Calu3 (cell line): ENCODE measurements at regions of chr2 and their contacts with region 1.

Region 1: DNA sequence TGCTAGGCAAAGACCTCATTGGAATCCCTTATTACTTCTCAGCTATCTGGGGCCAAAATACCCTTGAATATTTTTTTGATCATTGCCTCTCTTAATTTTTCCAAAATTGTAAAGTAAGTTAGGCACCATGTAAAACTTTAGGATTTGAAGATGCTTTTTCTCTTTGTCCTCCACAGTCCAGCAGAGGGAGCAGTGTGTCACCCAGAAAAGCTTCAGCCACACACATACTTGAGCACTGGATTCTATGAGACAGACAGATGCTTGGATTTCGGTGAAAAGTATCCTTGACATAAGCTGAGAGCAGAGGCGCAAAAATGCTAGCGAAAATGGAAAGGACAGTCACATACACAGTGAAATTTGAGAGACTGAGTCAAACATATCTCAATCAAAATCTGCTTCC is 74.7 kb upstream of the KCNJ3 start:
- DNase-seq: peak; percentile 53
- H3K4me3 Mint-ChIP-seq: no peak overlapping the region
- H3K27ac Mint-ChIP-seq: no peak overlapping the region
- H3K4me1 Mint-ChIP-seq: no peaks in the 10 kb centered on the region
- H3K27me3 Mint-ChIP-seq: no peaks in the 10 kb centered on the region
- CTCF ChIP-seq: peak; percentile 55

Region 2: DNA sequence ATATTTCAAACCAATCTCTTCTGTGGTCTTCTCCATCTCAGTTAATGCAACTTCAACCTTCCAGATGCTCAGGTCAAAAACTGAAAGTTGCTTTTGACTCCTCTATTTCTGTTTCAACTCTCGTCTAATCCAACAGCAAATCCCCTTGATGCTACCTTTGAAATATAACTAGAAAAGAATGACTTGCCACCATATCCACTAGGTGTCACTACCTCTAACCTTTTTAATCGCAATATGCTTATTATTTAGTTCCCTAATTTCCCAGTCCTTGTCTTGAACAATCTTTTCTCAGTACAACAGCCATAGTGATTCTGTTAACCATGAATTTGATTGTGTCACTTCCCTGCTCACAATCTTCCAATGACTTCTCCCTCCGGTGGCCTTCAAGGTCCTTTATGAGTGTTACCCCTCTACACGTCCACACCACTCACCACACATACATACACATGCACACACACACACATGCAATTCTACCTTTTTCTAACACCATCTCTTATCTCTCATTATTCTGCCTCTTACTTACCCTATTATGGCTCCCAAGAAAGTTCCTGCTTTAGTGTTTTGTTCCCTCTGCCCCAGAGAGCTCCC is 170.8 kb before region 1 on chr2:
- CTCF ChIA-PET with region 1: interaction called, 4 read pairs
- intact Hi-C with region 1: loop called (anchors 2 kb)
- DNase-seq: no peak
- H3K4me3 Mint-ChIP-seq: no peak overlapping the region
- H3K27ac Mint-ChIP-seq: no peak overlapping the region
- H3K4me1 Mint-ChIP-seq: no peaks in the 10 kb centered on the region
- H3K27me3 Mint-ChIP-seq: no peaks in the 10 kb centered on the region
- CTCF ChIP-seq: peak; percentile 32

Region 3: GRCh38 chr2:154638783-154639182 is 15.0 kb after region 1 on chr2:
- CTCF ChIA-PET with region 1: no interaction called
- intact Hi-C with region 1: no loop called
- DNase-seq: no peak
- H3K4me3 Mint-ChIP-seq: no peak overlapping the region
- H3K27ac Mint-ChIP-seq: no peak overlapping the region
- H3K4me1 Mint-ChIP-seq: peaks cover 9% of the 10 kb centered on the region
- H3K27me3 Mint-ChIP-seq: no peaks in the 10 kb centered on the region
- CTCF ChIP-seq: no peak

Region 4: DNA sequence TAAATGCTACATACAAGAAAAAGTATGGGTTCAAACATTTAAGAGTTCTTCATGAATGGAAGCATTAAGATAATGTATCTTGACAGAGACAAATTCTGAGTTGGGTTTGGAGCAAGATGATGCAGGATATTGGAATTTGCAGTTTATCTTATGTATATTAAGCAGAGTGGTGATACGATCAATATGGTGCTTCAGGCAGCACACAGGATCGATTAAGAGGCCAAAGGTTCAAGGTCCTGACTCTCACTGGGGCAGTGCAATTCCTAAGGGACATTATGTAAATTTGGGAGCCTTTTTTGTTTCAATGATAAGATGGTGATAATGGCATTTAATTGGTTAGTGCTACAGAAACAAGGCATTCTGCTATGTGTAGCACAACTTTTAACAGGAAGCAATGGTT is 456.6 kb after region 1 on chr2:
- CTCF ChIA-PET with region 1: no interaction called
- intact Hi-C with region 1: loop called (anchors 1 kb)
- DNase-seq: no peak
- H3K4me3 Mint-ChIP-seq: no peak overlapping the region
- H3K27ac Mint-ChIP-seq: peak overlapping the region; percentile 14
- H3K4me1 Mint-ChIP-seq: no peaks in the 10 kb centered on the region
- H3K27me3 Mint-ChIP-seq: no peaks in the 10 kb centered on the region
- CTCF ChIP-seq: no peak

Region 5: GRCh38 chr2:155223781-155224406 is 600.1 kb after region 1 on chr2:
- CTCF ChIA-PET with region 1: no interaction called
- intact Hi-C with region 1: loop called (anchors 1 kb)
- DNase-seq: peak; percentile 6
- H3K4me3 Mint-ChIP-seq: no peak overlapping the region
- H3K27ac Mint-ChIP-seq: no peak overlapping the region
- H3K4me1 Mint-ChIP-seq: no peaks in the 10 kb centered on the region
- H3K27me3 Mint-ChIP-seq: no peaks in the 10 kb centered on the region
- CTCF ChIP-seq: peak; percentile 51

Region 6: DNA sequence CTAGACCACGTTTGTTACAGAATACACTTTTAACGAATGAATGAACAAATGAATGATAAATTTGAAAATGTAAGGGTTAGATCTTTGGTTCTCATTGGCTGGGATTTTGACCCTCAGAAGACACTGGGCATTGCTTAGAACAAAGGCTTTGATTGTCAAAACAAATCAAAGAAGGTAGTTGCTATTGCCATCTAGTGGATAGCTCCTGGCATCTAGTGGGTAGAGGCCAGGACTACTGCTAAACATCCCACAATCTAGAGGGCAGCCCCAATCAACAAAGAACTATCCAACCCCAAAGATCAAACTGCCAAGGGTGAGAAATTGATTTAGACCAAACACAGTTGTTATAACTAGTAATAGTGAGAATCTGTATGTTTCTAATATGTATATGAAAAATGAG is 627.0 kb after region 1 on chr2:
- CTCF ChIA-PET with region 1: no interaction called
- intact Hi-C with region 1: loop called (anchors 2 kb)
- DNase-seq: peak; percentile 27
- H3K4me3 Mint-ChIP-seq: no peak overlapping the region
- H3K27ac Mint-ChIP-seq: no peak overlapping the region
- H3K4me1 Mint-ChIP-seq: no peaks in the 10 kb centered on the region
- H3K27me3 Mint-ChIP-seq: no peaks in the 10 kb centered on the region
- CTCF ChIP-seq: peak; percentile 38

Region 7: DNA sequence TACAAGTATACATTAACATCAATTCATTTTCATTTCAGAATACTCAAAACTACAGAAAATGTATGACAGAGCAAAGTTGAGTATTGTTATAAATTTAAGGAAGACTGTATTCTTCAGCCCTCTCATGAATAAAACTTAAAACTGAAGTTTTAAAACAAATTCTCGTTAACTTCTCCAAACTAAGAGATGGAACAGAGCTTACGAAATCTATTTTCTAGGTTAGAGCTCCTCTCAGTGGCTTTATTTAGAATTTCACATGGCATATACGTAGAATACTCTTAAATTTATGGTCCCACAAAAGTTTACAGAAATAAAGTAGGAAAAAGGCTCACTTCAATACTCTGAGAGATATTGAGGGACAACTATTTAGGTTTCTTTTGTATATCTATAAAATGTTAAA is 686.8 kb after region 1 on chr2:
- CTCF ChIA-PET with region 1: no interaction called
- intact Hi-C with region 1: loop called (anchors 1 kb)
- DNase-seq: no peak
- H3K4me3 Mint-ChIP-seq: no peak overlapping the region
- H3K27ac Mint-ChIP-seq: no peak overlapping the region
- H3K4me1 Mint-ChIP-seq: no peaks in the 10 kb centered on the region
- H3K27me3 Mint-ChIP-seq: no peaks in the 10 kb centered on the region
- CTCF ChIP-seq: peak; percentile 34